ENCODE measurements at regions of chr1 and their contacts with region 1.

Region 1: GRCh38 chr1:43946236-43947060 is at the start of gene IPO13:
- DNase-seq: peak; percentile 92 to 99 (median 96)
- ATAC-seq: peak; percentile 98
- H3K4me3 ChIP-seq: peak within 1 kb of the TSS; percentile 86
- H3K4me3 Mint-ChIP-seq: peak within 1 kb of the TSS; percentile 87 to 96 (median 90)
- H3K27ac ChIP-seq: peak within 1 kb of the TSS; percentile 97
- H3K27ac Mint-ChIP-seq: peak within 1 kb of the TSS; percentile 84 to 98 (median 94)
- H3K4me1 ChIP-seq: peaks cover 17% of the 10 kb centered on the region in 2 donors
- H3K4me1 Mint-ChIP-seq: peaks cover 37 to 68% (median 56%) of the 10 kb centered on the region in 7 donors
- H3K27me3 ChIP-seq: no peaks in the 10 kb centered on the region
- H3K27me3 Mint-ChIP-seq: no peaks in the 10 kb centered on the region
- total RNA-seq, gene IPO13: 10.1 to 32.3 (median 17.0) TPM

Region 2: DNA sequence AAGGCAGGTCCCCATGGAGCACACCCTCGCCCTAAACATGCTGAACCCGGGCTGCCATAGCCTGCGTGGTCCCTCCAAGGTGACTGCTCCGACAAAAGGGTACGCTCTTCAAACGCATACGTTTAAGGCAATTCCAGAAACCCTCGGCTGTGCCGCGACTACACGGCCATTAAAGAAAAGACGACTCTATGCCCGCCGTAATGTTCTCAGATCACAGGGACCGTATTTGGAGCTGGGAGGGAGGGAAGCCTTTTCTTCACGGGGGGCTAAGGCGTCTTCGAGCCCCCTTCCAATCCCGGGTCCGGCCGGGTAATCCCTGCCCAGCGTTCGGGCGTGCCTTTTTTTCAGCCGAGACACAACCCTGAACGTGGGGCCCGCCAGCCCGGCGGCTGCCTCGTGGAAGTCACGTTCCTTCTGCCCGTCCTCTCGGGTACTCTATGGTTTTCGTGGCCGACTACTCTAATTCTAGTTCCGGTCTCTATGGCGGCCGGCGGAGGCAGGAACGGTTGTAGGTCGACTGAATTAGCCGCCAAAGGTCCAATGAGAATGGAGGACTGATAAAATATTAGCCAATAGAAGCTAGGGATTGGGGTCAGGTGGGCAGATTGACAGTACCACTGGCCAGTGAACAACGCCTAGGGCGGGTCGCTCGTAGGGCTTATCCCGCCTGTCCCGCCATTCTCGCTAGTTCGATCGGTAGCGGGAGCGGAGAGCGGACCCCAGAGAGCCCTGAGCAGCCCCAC is 1264.5 kb before region 1 on chr1 and contains the start of gene YBX1:
- CTCF ChIA-PET with region 1: no interaction called
- POLR2A ChIA-PET with region 1: no interaction called
- intact Hi-C with region 1: loop called in 1 of 2 experiments (anchors 10 kb)
- DNase-seq: peak; percentile 85 to 98 (median 97)
- ATAC-seq: peak; percentile 94
- H3K4me3 ChIP-seq: peak within 1 kb of the TSS; percentile 74
- H3K4me3 Mint-ChIP-seq: peak within 1 kb of the TSS; percentile 95 to 99 (median 98)
- H3K27ac ChIP-seq: peak within 1 kb of the TSS; percentile 82
- H3K27ac Mint-ChIP-seq: peak within 1 kb of the TSS; percentile 93 to 98 (median 97)
- H3K4me1 ChIP-seq: peaks cover 35 to 47% of the 10 kb centered on the region in 2 donors
- H3K4me1 Mint-ChIP-seq: peaks cover 42 to 66% (median 54%) of the 10 kb centered on the region in 7 donors
- H3K27me3 ChIP-seq: no peaks in the 10 kb centered on the region
- H3K27me3 Mint-ChIP-seq: no peaks in the 10 kb centered on the region
- total RNA-seq, gene YBX1: 277 to 471 (median 287) TPM

Region 3: GRCh38 chr1:43367904-43368645 is 578.4 kb before region 1 on chr1 and contains the start of gene ELOVL1:
- CTCF ChIA-PET with region 1: no interaction called
- POLR2A ChIA-PET with region 1: no interaction called
- intact Hi-C with region 1: loop called in 1 of 2 experiments (anchors 2 kb)
- DNase-seq: peak; percentile 40 to 94 (median 58)
- ATAC-seq: peak; percentile 91
- H3K4me3 ChIP-seq: peak within 1 kb of the TSS; percentile 89
- H3K4me3 Mint-ChIP-seq: peak within 1 kb of the TSS; percentile 86 to 97 (median 92)
- H3K27ac ChIP-seq: peak within 1 kb of the TSS; percentile 90
- H3K27ac Mint-ChIP-seq: peak within 1 kb of the TSS; percentile 88 to 95 (median 91)
- H3K4me1 ChIP-seq: peaks cover 13 to 22% of the 10 kb centered on the region in 2 donors
- H3K4me1 Mint-ChIP-seq: peaks cover 24 to 47% (median 42%) of the 10 kb centered on the region in 7 donors
- H3K27me3 ChIP-seq: no peaks in the 10 kb centered on the region
- H3K27me3 Mint-ChIP-seq: no peaks in the 10 kb centered on the region
- total RNA-seq, gene ELOVL1: 25.9 to 65.3 (median 32.3) TPM

Region 4: DNA sequence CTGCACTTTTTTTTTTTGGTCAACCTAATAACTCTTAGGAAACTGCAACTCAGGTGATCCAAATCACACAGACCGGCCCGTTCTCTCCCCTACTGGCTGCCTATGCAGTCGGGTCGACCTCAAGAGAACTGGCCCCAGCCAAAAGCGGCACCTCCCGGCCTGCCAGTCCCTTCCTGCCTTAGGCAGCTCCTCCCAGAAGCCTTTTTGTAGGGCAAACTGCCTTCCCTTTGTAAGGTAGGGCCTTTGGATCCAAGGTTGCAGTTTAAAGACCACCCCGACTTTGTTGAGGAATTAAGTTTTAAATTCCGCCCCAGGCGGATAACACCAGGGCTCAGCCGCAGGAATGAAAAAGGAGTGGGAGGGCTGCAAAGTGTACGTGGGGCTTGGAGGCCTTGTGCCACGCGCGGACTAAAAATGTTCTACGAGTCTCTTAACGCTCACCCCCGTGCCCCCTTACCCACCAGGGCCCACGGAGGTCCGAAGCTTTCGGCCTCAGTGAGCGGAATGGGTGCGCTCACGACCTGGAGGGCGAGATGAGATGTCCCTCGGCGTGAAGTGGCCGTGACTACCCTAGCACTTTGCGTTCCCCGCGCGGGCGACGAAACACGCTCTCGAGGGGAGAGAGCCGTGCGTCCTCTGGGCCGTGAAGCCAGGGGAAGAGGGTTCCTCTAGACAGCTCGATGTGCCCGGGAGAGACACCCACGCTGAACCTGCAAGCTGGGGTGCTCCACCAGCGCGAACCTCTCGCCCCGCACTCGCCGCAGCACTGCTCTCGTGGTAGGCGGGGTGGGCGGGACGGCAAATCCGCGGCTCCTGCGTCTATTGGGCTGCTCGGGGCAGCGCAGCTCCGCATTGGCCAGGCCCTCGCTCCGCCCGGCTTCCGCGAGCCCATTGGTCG is 239.6 kb before region 1 on chr1:
- CTCF ChIA-PET with region 1: no interaction called
- POLR2A ChIA-PET with region 1: no interaction called
- intact Hi-C with region 1: loop called (anchors 2 kb)
- DNase-seq: peak; percentile 84 to 94 (median 89)
- ATAC-seq: peak; percentile 98
- H3K4me3 ChIP-seq: peak overlapping the region; percentile 92
- H3K4me3 Mint-ChIP-seq: peak overlapping the region; percentile 82 to 90 (median 88)
- H3K27ac ChIP-seq: peak overlapping the region; percentile 79
- H3K27ac Mint-ChIP-seq: peak overlapping the region in 7 of 9 donors; percentile 32 to 87 (median 79)
- H3K4me1 ChIP-seq: peaks cover 7 to 10% of the 10 kb centered on the region in 2 donors
- H3K4me1 Mint-ChIP-seq: peaks cover 7 to 46% (median 27%) of the 10 kb centered on the region in 7 donors
- H3K27me3 ChIP-seq: no peaks in the 10 kb centered on the region
- H3K27me3 Mint-ChIP-seq: no peaks in the 10 kb centered on the region

Region 5: GRCh38 chr1:43934101-43934985 is 12.1 kb before region 1 on chr1:
- CTCF ChIA-PET with region 1: interaction called, 17 read pairs
- POLR2A ChIA-PET with region 1: interaction called, 5 read pairs
- intact Hi-C with region 1: no loop called
- DNase-seq: peak in 6 of 9 donors; percentile 29 to 68 (median 44)
- ATAC-seq: peak; percentile 82
- H3K4me3 ChIP-seq: no peak overlapping the region
- H3K4me3 Mint-ChIP-seq: peak overlapping the region in 8 of 10 donors; percentile 12 to 70 (median 46)
- H3K27ac ChIP-seq: no peak overlapping the region
- H3K27ac Mint-ChIP-seq: no peak overlapping the region
- H3K4me1 ChIP-seq: peaks cover 0 to 9% of the 10 kb centered on the region in 2 donors
- H3K4me1 Mint-ChIP-seq: peaks cover 10 to 29% (median 14%) of the 10 kb centered on the region in 7 donors
- H3K27me3 ChIP-seq: peaks cover 9 to 19% of the 10 kb centered on the region in 2 donors
- H3K27me3 Mint-ChIP-seq: peaks cover 21 to 29% (median 26%) of the 10 kb centered on the region in 5 donors

Region 6: GRCh38 chr1:43991476-43992231 is 45.2 kb after region 1 on chr1 and contains the start of gene CCDC24:
- CTCF ChIA-PET with region 1: interaction called, 3 read pairs
- POLR2A ChIA-PET with region 1: no interaction called
- intact Hi-C with region 1: loop called (anchors 1 kb)
- DNase-seq: peak; percentile 38 to 81 (median 58)
- ATAC-seq: peak; percentile 91
- H3K4me3 ChIP-seq: peak within 1 kb of the TSS; percentile 79
- H3K4me3 Mint-ChIP-seq: peak within 1 kb of the TSS; percentile 83 to 95 (median 92)
- H3K27ac ChIP-seq: peak within 1 kb of the TSS; percentile 72
- H3K27ac Mint-ChIP-seq: peak within 1 kb of the TSS in 8 of 9 donors; percentile 43 to 91 (median 73)
- H3K4me1 ChIP-seq: peaks cover 0 to 11% of the 10 kb centered on the region in 2 donors
- H3K4me1 Mint-ChIP-seq: peaks cover 0 to 17% (median 9%) of the 10 kb centered on the region in 7 donors
- H3K27me3 ChIP-seq: no peaks in the 10 kb centered on the region
- H3K27me3 Mint-ChIP-seq: no peaks in the 10 kb centered on the region
- total RNA-seq, gene CCDC24: 0.40 to 2.9 (median 1.6) TPM

Region 7: GRCh38 chr1:44631647-44632539 is 685.4 kb after region 1 on chr1:
- CTCF ChIA-PET with region 1: no interaction called
- POLR2A ChIA-PET with region 1: no interaction called
- intact Hi-C with region 1: loop called in 1 of 2 experiments (anchors 10 kb)
- DNase-seq: peak; percentile 80 to 92 (median 87)
- ATAC-seq: peak; percentile 87
- H3K4me3 ChIP-seq: peak overlapping the region; percentile 70
- H3K4me3 Mint-ChIP-seq: peak overlapping the region; percentile 69 to 95 (median 90)
- H3K27ac ChIP-seq: peak overlapping the region; percentile 85
- H3K27ac Mint-ChIP-seq: peak overlapping the region; percentile 46 to 99 (median 97)
- H3K4me1 ChIP-seq: peaks cover 8 to 13% of the 10 kb centered on the region in 2 donors
- H3K4me1 Mint-ChIP-seq: peaks cover 26 to 50% (median 39%) of the 10 kb centered on the region in 7 donors
- H3K27me3 ChIP-seq: no peaks in the 10 kb centered on the region
- H3K27me3 Mint-ChIP-seq: no peaks in the 10 kb centered on the region

Measured in naive thymus-derived CD4-positive, alpha-beta T cell (primary cell).